Dendritic cell treated with granulocyte-macrophage colony-stimulating factor and Interleukin-4, amounts not matched to agents 40 ng/mL and 50 ng/mL, for 4 days (primary cell): ENCODE measurements at regions of chr18 and their contacts with region 1.

Region 1: GRCh38 chr18:1075322-1075721 is 170.7 kb downstream of the ADCYAP1 start:
- H3K4me3 Mint-ChIP-seq: no peak overlapping the region
- H3K27ac Mint-ChIP-seq: no peak overlapping the region
- H3K4me1 Mint-ChIP-seq: no peaks in the 10 kb centered on the region
- H3K27me3 Mint-ChIP-seq: no peaks in the 10 kb centered on the region

Region 2: GRCh38 chr18:1124495-1124894 is 49.2 kb after region 1 on chr18:
- intact Hi-C with region 1: loop called (anchors 10 kb)
- H3K4me3 Mint-ChIP-seq: no peak overlapping the region
- H3K27ac Mint-ChIP-seq: no peak overlapping the region
- H3K4me1 Mint-ChIP-seq: no peaks in the 10 kb centered on the region
- H3K27me3 Mint-ChIP-seq: no peaks in the 10 kb centered on the region

Region 3: DNA sequence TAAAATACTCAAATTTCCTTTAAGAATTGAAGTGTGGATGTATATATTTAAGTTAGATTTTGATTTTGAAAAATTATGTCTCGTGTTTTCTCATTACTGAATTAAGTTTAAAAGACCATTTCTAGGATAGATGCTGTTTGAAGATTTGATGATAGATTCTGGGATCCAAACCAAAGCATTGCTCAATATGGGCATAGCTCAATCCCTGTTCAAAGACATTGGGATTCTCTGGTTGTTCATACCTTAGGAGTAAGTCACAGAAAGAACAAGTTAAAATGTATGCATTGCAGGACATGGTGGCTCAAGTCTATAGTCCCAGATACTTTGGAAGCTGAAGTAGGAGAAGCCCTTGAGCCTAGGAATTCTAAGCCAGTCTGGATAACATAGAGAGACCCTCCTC is 451.7 kb after region 1 on chr18:
- intact Hi-C with region 1: no loop called
- H3K4me3 Mint-ChIP-seq: no peak overlapping the region
- H3K27ac Mint-ChIP-seq: no peak overlapping the region
- H3K4me1 Mint-ChIP-seq: no peaks in the 10 kb centered on the region
- H3K27me3 Mint-ChIP-seq: no peaks in the 10 kb centered on the region

Region 4: DNA sequence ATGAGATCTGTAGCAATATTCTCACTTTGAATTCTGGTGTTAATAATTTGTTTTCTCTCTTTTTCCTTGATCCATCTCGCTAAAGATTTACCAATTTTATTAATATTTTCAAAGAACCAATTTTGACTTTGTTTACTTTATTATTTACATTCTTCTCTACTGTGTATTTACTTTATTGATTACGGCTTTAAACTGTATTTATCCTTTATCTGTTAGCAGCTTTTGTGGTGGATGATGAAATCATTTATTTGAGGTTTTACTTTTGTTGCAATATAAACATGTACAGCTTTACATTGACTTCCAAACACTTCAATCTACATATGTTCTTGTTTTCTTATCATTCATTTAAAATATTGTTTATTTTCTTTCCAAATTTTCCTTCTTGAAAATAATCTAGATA is 549.3 kb after region 1 on chr18:
- intact Hi-C with region 1: no loop called
- H3K4me3 Mint-ChIP-seq: no peak overlapping the region
- H3K27ac Mint-ChIP-seq: no peak overlapping the region
- H3K4me1 Mint-ChIP-seq: no peaks in the 10 kb centered on the region
- H3K27me3 Mint-ChIP-seq: no peaks in the 10 kb centered on the region